ENCODE measurements at regions of chr5 and their contacts with region 1.

Region 1: GRCh38 chr5:16791036-16791705 is 144.9 kb downstream of the MYO10 start:
- DNase-seq: no peak
- H3K4me3 ChIP-seq: no peak overlapping the region
- H3K27ac ChIP-seq: no peak overlapping the region
- H3K4me1 ChIP-seq: no peaks in the 10 kb centered on the region
- H3K27me3 ChIP-seq: no peaks in the 10 kb centered on the region
- CTCF ChIP-seq: peak; percentile 53 to 69 (median 56)

Region 2: GRCh38 chr5:16844948-16845347 is 53.8 kb after region 1 on chr5:
- intact Hi-C with region 1: no loop called
- DNase-seq: no peak
- H3K4me3 ChIP-seq: no peak overlapping the region
- H3K27ac ChIP-seq: no peak overlapping the region
- H3K4me1 ChIP-seq: no peaks in the 10 kb centered on the region
- H3K27me3 ChIP-seq: no peaks in the 10 kb centered on the region
- CTCF ChIP-seq: no peak

Region 3: GRCh38 chr5:17204133-17204489 is 412.9 kb after region 1 on chr5:
- intact Hi-C with region 1: loop called (anchors 1 kb)
- DNase-seq: no peak
- H3K4me3 ChIP-seq: no peak overlapping the region
- H3K27ac ChIP-seq: no peak overlapping the region
- H3K4me1 ChIP-seq: no peaks in the 10 kb centered on the region
- H3K27me3 ChIP-seq: no peaks in the 10 kb centered on the region
- CTCF ChIP-seq: no peak

Measured in ascending aorta (tissue), 2 donors.